T-cell (primary cell): ENCODE measurements at regions of chrX and their contacts with region 1.

Region 1: GRCh38 chrX:131861088-131861787 is 161.9 kb upstream of the STK26 start:
- DNase-seq: no peak
- ATAC-seq: no peak
- H3K4me3 ChIP-seq: no peak overlapping the region
- H3K4me3 Mint-ChIP-seq: no peak overlapping the region
- H3K27ac ChIP-seq: no peak overlapping the region
- H3K27ac Mint-ChIP-seq: no peak overlapping the region
- H3K4me1 ChIP-seq: no peaks in the 10 kb centered on the region
- H3K4me1 Mint-ChIP-seq: no peaks in the 10 kb centered on the region
- H3K27me3 ChIP-seq: peaks cover 0 to 2% of the 10 kb centered on the region in 2 experiments
- H3K27me3 Mint-ChIP-seq: peaks cover 0 to 26% of the 10 kb centered on the region in 2 donors

Region 2: GRCh38 chrX:131830400-131831184 is 30.6 kb before region 1 on chrX:
- CTCF ChIA-PET with region 1: interaction called in 1 of 2 experiments, 11 read pairs
- POLR2A ChIA-PET with region 1: no interaction called
- DNase-seq: peak in 25 of 35 experiments; percentile 8 to 74 (median 34)
- ATAC-seq: peak; percentile 63 to 79 (median 74)
- H3K4me3 ChIP-seq: peak overlapping the region; percentile 4 to 42
- H3K4me3 Mint-ChIP-seq: peak overlapping the region; percentile 25 to 56 (median 51)
- H3K27ac ChIP-seq: peak overlapping the region; percentile 41
- H3K27ac Mint-ChIP-seq: peak overlapping the region; percentile 60 to 77
- H3K4me1 ChIP-seq: peaks cover 6 to 15% of the 10 kb centered on the region in 2 experiments
- H3K4me1 Mint-ChIP-seq: peaks cover 25 to 31% (median 31%) of the 10 kb centered on the region in 3 donors
- H3K27me3 ChIP-seq: no peaks in the 10 kb centered on the region
- H3K27me3 Mint-ChIP-seq: no peaks in the 10 kb centered on the region

Region 3: GRCh38 chrX:131923611-131924235 is 62.5 kb after region 1 on chrX:
- CTCF ChIA-PET with region 1: no interaction called
- POLR2A ChIA-PET with region 1: no interaction called
- DNase-seq: no peak
- ATAC-seq: no peak
- H3K4me3 ChIP-seq: no peak overlapping the region
- H3K4me3 Mint-ChIP-seq: no peak overlapping the region
- H3K27ac ChIP-seq: no peak overlapping the region
- H3K27ac Mint-ChIP-seq: peak overlapping the region in 1 of 2 donors; percentile 35
- H3K4me1 ChIP-seq: no peaks in the 10 kb centered on the region
- H3K4me1 Mint-ChIP-seq: peaks cover 2 to 10% (median 8%) of the 10 kb centered on the region in 3 donors
- H3K27me3 ChIP-seq: no peaks in the 10 kb centered on the region
- H3K27me3 Mint-ChIP-seq: peaks cover 1 to 53% of the 10 kb centered on the region in 2 donors